ENCODE measurements at regions of chr20 and their contacts with region 1.

Region 1: GRCh38 chr20:49846206-49846807 is 33.7 kb downstream of the SLC9A8 start:
- DNase-seq: peak; percentile 48
- H3K4me3 ChIP-seq: no peak overlapping the region
- H3K27ac ChIP-seq: no peak overlapping the region
- H3K4me1 ChIP-seq: peaks cover 15% of the 10 kb centered on the region
- H3K27me3 ChIP-seq: no peaks in the 10 kb centered on the region
- CTCF ChIP-seq: peak; percentile 46 to 65

Region 2: GRCh38 chr20:49812463-49813304 is 33.6 kb before region 1 on chr20 and contains the start of gene SLC9A8:
- CTCF ChIA-PET with region 1: no interaction called
- dilution Hi-C with region 1: no loop called
- in situ Hi-C with region 1: no loop called
- intact Hi-C with region 1: no loop called
- DNase-seq: peak; percentile 98
- H3K4me3 ChIP-seq: peak within 1 kb of the TSS; percentile 67 to 96 (median 69)
- H3K27ac ChIP-seq: peak within 1 kb of the TSS; percentile 95
- H3K4me1 ChIP-seq: peaks cover 13% of the 10 kb centered on the region
- H3K27me3 ChIP-seq: no peaks in the 10 kb centered on the region
- CTCF ChIP-seq: peak; percentile 17 to 49
- total RNA-seq, gene SLC9A8: 6.8 to 7.7 TPM

Region 3: DNA sequence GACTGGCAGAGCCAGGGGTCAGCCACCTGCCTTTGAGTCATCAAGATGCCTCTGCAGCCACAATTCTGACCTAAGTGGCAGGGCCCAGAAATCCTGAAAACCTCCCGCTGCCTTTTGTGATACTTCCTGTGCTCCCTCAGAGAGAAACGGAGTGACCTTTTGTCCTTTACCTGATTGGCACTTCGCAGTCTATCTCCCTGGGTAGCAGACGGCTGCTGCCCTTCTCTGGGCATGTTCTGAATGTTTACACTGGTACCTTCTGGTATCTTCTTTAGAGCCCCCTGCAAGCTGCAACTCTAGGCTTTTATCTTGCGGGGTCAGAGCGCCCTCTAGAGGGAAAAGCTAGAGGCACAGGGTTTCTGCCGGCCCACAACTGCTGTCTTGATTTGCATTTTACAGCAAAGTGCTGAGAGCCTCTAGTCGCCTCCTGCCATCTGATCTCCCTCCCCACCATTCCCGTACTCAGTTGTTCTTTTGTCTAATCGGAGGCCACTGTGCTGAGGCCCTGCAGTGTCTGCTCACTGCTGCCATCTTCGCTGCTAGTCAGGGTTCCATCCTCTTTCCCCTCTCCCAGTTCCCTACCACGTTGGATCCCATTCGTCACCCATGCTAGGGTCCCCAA is 42.1 kb after region 1 on chr20:
- CTCF ChIA-PET with region 1: no interaction called
- dilution Hi-C with region 1: loop called (anchors 5 kb)
- in situ Hi-C with region 1: no loop called
- intact Hi-C with region 1: no loop called
- DNase-seq: peak; percentile 19
- H3K4me3 ChIP-seq: no peak overlapping the region
- H3K27ac ChIP-seq: no peak overlapping the region
- H3K4me1 ChIP-seq: no peaks in the 10 kb centered on the region
- H3K27me3 ChIP-seq: no peaks in the 10 kb centered on the region
- CTCF ChIP-seq: peak; percentile 73 to 79

Region 4: DNA sequence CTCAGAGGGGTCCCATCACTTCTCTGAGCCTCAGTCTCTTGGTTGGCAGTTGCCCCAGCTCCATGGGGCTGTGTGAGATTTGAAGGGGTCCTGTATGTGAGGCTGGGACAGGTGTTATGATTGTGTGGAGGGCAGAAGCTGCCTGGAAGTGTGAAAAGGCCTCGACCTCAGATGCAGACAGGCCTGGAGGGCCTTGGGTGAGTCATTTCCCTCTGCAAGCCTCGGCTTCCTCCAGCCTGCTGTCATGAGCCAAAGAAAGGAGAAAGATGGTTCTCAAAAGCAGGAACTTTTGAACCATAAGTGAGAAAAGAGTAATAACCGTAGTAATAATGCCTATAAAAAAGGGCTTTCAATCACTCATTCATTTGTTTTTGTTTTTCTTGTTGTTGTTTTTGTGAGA is 174.0 kb after region 1 on chr20:
- CTCF ChIA-PET with region 1: no interaction called
- dilution Hi-C with region 1: no loop called
- in situ Hi-C with region 1: no loop called
- intact Hi-C with region 1: no loop called
- DNase-seq: peak; percentile 61
- H3K4me3 ChIP-seq: no peak overlapping the region
- H3K27ac ChIP-seq: no peak overlapping the region
- H3K4me1 ChIP-seq: peaks cover 20% of the 10 kb centered on the region
- H3K27me3 ChIP-seq: no peaks in the 10 kb centered on the region
- CTCF ChIP-seq: no peak

Measured in mammary epithelial cell (primary cell).